ENCODE measurements at regions of chr4 and their contacts with region 1.

Region 1: GRCh38 chr4:145216535-145216934 is 36.1 kb upstream of the OTUD4 start:
- DNase-seq: no peak
- H3K4me3 ChIP-seq: no peak overlapping the region
- H3K27ac ChIP-seq: no peak overlapping the region
- H3K27me3 ChIP-seq: no peaks in the 10 kb centered on the region
- CTCF ChIP-seq: peak in 50 of 56 donors; percentile 21 to 73 (median 48)

Region 2: DNA sequence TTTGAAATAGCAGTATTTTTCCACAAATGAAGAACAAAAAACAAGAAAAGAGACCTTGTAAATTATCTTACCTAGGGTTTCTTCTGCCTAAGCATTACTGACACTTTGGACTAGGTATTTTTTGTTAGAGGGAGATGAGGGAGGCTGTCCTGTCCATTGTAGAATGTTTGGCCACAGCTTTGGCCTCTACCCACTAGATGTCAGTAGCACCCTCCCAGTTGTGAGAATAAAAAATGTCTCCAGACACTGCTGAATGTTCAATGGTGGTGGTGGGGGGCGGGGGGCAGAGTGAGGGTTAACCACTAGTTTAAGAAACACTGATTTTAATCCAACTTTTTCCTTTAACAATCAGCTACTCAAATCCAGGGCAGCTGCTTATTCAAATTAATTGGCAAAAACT is 62.0 kb before region 1 on chr4:
- intact Hi-C with region 1: no loop called
- DNase-seq: no peak
- H3K4me3 ChIP-seq: no peak overlapping the region
- H3K27ac ChIP-seq: peak overlapping the region in 3 of 59 donors; percentile 9 to 31 (median 10)
- H3K27me3 ChIP-seq: no peaks in the 10 kb centered on the region
- CTCF ChIP-seq: peak in 50 of 56 donors; percentile 18 to 70 (median 45)

Region 3: GRCh38 chr4:145609481-145610427 is 393.2 kb after region 1 on chr4:
- intact Hi-C with region 1: loop called in 1 of 2 experiments (anchors 5 kb)
- DNase-seq: peak; percentile 28 to 83 (median 54)
- H3K4me3 ChIP-seq: no peak overlapping the region
- H3K27ac ChIP-seq: no peak overlapping the region
- H3K27me3 ChIP-seq: no peaks in the 10 kb centered on the region
- CTCF ChIP-seq: peak in 55 of 56 donors; percentile 51 to 84 (median 74)